ENCODE measurements at regions of chr9 and their contacts with region 1.

Region 1: GRCh38 chr9:98207606-98208005 is 15.2 kb upstream of the CORO2A start:
- DNase-seq: no peak
- ATAC-seq: peak; percentile 30; the same call in 1 of the 2 replicates
- H3K4me3 ChIP-seq: no peak overlapping the region
- H3K27ac ChIP-seq: no peak overlapping the region
- H3K4me1 ChIP-seq: peaks cover 0 to 4% of the 10 kb centered on the region in 2 experiments; a peak in 1 of 4 replicates
- H3K27me3 ChIP-seq: no peaks in the 10 kb centered on the region
- CTCF ChIP-seq: peak; percentile 10 to 28 (median 16); a peak in 1 of 6 replicates
- POLR2A ChIP-seq: no peak
- RAD21 ChIP-seq: 0 out of 2 replicates have a peak, but pooled peaks have one; percentile 21

Region 2: DNA sequence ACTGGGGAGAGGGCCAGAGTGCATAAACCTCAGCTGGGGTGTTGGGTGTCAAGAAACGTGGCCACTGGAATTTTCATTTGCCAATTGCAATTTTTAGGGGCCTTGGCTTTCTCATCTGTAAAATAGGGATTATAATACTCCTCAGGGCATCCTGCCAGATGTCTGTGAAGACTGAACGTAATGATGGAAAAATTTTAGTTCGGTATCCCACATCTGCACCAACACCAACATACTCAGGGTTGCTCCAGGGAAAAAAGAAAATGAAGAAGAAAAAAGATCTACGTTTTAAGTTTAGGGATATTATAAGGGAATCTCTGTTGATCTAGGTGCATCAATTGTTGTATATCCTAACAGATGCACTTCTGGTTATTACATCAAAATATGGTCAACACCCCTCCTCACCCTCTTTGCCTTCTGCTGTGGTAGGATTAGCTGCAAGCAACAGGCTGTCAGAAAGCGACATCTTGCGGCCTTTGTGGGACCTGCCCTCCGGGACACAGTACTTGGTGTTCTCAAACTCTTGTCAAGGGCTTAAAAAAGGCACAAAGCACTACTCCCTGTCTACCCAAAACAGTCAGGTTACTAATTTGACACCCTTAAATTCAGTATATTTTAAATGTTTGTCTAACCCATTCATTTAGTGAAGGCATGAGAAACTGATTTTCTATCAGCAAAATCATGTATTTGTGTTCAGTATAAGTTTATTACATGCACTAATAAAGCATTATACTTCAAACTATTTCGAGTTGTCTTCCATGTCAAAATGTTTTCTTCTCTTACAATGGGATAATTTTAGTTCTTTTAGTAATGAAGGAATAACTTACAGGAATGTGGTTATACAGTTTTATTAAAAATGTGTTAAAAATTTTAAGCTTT is 56.1 kb after region 1 on chr9:
- CTCF ChIA-PET with region 1: interaction called, 10 read pairs
- POLR2A ChIA-PET with region 1: no interaction called
- RAD21 ChIA-PET with region 1: interaction called in 1 of 2 experiments, 3 read pairs
- intact Hi-C with region 1: loop called (anchors 1 kb)
- DNase-seq: peak; percentile 69
- ATAC-seq: peak; percentile 100
- H3K4me3 ChIP-seq: no peak overlapping the region
- H3K27ac ChIP-seq: no peak overlapping the region
- H3K4me1 ChIP-seq: no peaks in the 10 kb centered on the region
- H3K27me3 ChIP-seq: no peaks in the 10 kb centered on the region
- CTCF ChIP-seq: peak; percentile 92 to 96 (median 96)
- POLR2A ChIP-seq: no peak
- RAD21 ChIP-seq: peak; percentile 98